Activated CD4-positive, alpha-beta memory T cell treated with anti-CD3 and anti-CD28 coated beads for 36 hours (primary cell): ENCODE measurements at regions of chr20 and their contacts with region 1.

Region 1: DNA sequence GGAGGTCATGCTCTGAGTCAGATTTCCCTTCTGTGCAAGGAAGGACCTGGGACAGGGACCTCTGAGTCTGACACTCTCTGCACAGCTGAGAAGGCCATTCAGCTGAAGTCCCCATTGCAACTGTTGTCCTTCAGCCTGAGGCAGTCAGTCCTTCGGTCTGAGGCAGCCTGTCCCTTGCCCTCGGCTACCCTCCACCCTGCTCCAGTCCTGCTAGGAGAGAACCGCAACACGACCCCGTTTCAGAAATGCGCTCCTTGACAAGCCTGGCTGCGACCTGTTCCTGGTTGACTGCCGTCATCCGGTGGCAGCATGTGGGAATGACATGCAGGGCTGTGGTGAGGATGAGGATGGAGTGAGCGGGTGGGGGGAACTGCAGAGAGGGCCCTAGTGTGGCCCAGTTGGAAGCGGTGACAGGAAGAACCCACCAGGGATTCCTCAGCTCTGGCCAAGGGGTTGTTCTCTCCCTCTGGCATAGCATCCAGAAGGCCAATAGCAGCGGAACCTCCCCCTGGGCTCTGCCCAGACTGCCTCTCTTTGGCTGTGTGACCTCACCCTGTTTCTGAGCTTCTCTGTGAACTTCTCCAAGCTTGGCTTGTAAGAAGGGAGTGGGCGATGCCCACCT is 40.3 kb upstream of the ANGPT4 start:
- DNase-seq: peak; percentile 80
- H3K4me3 Mint-ChIP-seq: no peak overlapping the region
- H3K27ac Mint-ChIP-seq: no peak overlapping the region
- H3K4me1 Mint-ChIP-seq: peaks cover 2% of the 10 kb centered on the region
- H3K27me3 Mint-ChIP-seq: peaks cover 34% of the 10 kb centered on the region

Region 2: DNA sequence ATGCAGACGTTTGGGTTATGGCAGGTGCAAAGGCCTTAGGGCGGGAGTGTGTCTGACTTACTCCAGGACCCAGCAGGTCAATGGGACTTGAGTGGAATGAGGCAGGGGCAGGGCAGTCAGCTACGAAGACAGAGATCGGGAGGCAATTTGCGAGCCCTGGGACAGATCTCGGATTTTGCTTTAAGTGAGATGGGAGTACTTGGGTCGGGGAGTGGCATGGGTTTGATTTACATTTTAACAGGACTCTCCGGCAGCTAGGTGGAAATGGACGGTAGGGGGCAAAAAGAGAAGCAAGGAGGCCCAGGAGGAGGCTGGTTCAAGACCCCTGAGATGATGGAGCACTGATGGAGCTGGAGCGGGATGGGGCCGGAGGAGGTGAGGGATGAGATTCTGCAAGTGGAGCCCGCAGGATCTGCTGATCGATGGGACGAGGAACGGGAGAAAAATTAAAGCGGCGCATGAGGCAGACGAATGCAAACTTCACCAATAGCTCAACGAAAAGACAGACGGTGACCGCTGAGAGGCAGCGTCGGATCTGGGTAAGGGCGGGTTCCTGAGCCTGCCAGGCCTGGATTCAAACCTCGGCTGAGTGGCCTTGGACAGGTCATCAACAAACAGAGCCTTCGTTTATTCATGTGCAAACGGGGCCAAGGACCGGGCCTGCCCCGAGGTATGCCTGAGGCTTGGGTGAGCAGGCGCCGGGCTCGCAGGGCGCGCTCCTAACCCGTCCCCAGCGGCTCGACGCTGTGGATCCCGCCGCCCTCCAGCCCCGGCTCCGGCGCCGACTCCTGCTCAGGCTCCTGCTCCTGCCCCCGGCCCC is 549.1 kb before region 1 on chr20:
- CTCF ChIA-PET with region 1: no interaction called
- POLR2A ChIA-PET with region 1: no interaction called
- intact Hi-C with region 1: no loop called
- DNase-seq: peak; percentile 77
- H3K4me3 Mint-ChIP-seq: peak overlapping the region; percentile 79
- H3K27ac Mint-ChIP-seq: peak overlapping the region; percentile 82
- H3K4me1 Mint-ChIP-seq: peaks cover 39% of the 10 kb centered on the region
- H3K27me3 Mint-ChIP-seq: no peaks in the 10 kb centered on the region

Region 3: DNA sequence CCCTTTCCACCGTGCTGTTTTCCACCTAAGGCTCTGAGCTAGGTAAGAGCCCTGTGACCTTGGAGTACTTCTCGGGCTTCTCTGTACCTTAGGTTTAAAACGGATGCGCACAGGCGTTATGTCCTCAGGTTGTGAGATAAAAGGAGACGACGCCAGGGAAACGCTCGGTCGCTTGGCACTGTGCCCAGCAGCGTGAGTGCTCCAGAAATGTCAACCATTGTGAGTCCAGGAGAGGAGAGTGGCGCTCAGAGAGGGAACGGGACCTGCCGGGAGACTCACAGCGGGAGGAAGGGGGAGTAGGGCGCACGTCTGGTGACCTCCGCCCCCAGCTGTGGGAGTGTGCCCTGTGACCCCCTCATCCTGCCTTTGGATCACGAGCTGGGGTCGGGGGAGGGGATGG is 247.0 kb before region 1 on chr20:
- CTCF ChIA-PET with region 1: no interaction called
- POLR2A ChIA-PET with region 1: no interaction called
- intact Hi-C with region 1: no loop called
- DNase-seq: no peak
- H3K4me3 Mint-ChIP-seq: no peak overlapping the region
- H3K27ac Mint-ChIP-seq: no peak overlapping the region
- H3K4me1 Mint-ChIP-seq: no peaks in the 10 kb centered on the region
- H3K27me3 Mint-ChIP-seq: peaks cover 25% of the 10 kb centered on the region

Region 4: DNA sequence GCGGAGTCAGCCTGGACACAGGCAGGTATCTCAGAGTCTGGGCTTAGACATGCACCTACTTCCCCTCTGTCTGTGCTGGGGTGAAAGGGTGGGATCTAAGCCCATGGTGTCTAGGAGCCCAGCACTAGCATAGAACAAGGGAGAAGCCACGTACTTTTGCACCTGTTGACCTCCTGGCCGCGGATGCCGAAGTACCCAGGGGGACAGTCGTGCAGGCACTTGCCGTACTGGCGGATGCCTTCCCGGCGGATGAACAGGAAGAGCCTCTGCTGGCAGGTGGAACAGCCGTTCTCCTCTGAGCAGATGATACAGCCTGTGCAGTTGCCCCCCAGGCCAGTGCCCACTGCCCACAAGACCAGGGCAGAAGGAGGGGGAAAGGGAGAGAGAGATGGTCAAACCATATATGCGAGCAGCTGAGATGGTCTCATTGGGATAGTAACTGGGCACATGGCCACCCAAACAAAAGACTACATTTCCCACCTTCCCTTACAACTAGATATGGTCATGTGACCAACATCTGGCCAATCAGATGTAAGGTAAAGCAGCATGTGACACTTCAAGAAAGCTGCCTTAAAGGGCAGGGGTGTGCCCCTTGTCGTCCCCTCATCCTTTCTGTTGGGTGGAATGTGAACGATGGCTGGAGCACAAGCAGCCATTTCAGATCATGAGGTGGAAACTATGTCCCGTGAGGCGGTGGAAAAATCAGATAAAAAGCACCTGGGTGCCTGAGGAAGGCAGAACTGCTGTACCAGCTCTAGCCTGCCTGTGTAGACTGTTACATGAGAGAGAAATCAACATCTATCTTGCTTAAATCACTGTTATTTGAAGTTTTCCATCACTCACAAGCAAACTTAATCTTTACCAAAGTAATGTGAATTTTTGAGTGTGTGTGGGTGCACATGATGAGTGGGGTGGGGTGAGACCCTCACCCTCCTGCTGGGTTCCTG is 11.6 kb after region 1 on chr20:
- CTCF ChIA-PET with region 1: interaction called, 37 read pairs
- POLR2A ChIA-PET with region 1: interaction called, 3 read pairs
- intact Hi-C with region 1: no loop called
- DNase-seq: no peak
- H3K4me3 Mint-ChIP-seq: no peak overlapping the region
- H3K27ac Mint-ChIP-seq: no peak overlapping the region
- H3K4me1 Mint-ChIP-seq: no peaks in the 10 kb centered on the region
- H3K27me3 Mint-ChIP-seq: peaks cover 5% of the 10 kb centered on the region

Region 5: GRCh38 chr20:973785-974194 is 17.3 kb after region 1 on chr20:
- CTCF ChIA-PET with region 1: interaction called, 37 read pairs
- POLR2A ChIA-PET with region 1: no interaction called
- intact Hi-C with region 1: no loop called
- DNase-seq: peak; percentile 54
- H3K4me3 Mint-ChIP-seq: no peak overlapping the region
- H3K27ac Mint-ChIP-seq: no peak overlapping the region
- H3K4me1 Mint-ChIP-seq: peaks cover 2% of the 10 kb centered on the region
- H3K27me3 Mint-ChIP-seq: no peaks in the 10 kb centered on the region